ENCODE measurements at regions of chr16 and their contacts with region 1.

Region 1: GRCh38 chr16:64051824-64052223 is 1070.0 kb downstream of the CDH11 start:
- DNase-seq: no peak
- ATAC-seq: no peak

Region 2: DNA sequence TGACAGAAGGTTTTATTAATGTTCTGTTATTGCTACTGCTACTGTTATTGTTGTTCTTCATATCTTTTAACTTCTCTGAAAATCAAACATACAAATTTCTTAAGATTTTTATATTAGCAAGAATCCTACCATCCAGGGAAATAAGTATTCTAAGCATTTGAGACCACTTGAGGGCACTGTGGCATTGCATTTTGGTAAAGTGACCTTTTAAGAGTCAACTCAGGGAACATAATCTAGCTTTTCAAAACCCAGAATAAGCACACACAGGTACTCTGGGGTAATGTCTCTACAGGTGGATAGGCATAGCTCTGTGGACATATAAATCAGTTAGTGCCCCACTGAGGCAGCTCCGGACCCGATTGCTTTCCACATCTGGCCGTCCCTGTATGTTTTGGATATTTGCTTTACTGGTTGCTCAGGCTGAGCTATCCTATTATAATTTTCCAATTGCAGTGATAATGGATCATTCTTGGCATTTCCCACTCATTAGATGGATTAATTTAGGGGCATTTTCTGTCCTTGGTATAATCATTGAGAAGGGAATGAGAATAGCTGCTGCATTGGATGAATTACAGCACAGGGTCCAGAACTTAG is 590.5 kb before region 1 on chr16:
- intact Hi-C with region 1: loop called (anchors 5 kb)
- DNase-seq: no peak
- ATAC-seq: no peak

Measured in Right ventricle myocardium inferior (tissue), 1 donor.